ENCODE measurements at regions of chr3 and their contacts with region 1.

Region 1: GRCh38 chr3:186259612-186260383 is 102.2 kb downstream of the DGKG start:
- DNase-seq: peak; percentile 77 to 89
- H3K4me3 ChIP-seq: no peak overlapping the region
- H3K27ac ChIP-seq: no peak overlapping the region
- H3K4me1 ChIP-seq: peaks cover 0 to 8% (median 4%) of the 10 kb centered on the region in 4 experiments; a peak in 3 of 7 replicates
- H3K27me3 ChIP-seq: no peaks in the 10 kb centered on the region; a peak in 2 of 7 replicates
- CTCF ChIP-seq: peak; percentile 79 to 97 (median 94)
- EP300 ChIP-seq: peak in 1 of 2 experiments; percentile 41; a peak in 1 of 3 replicates
- POLR2A ChIP-seq: 0 out of 3 replicates have a peak, but pooled peaks of 1 of the 2 experiments have one; percentile 29
- RAD21 ChIP-seq: peak; percentile 87 to 93

Region 2: GRCh38 chr3:185976977-185977678 is 282.7 kb before region 1 on chr3:
- CTCF ChIA-PET with region 1: interaction called, 17 read pairs
- POLR2A ChIA-PET with region 1: no interaction called
- DNase-seq: peak; percentile 41 to 93
- H3K4me3 ChIP-seq: no peak overlapping the region
- H3K27ac ChIP-seq: no peak overlapping the region
- H3K4me1 ChIP-seq: no peaks in the 10 kb centered on the region
- H3K27me3 ChIP-seq: no peaks in the 10 kb centered on the region
- CTCF ChIP-seq: peak; percentile 90 to 99 (median 97)
- EP300 ChIP-seq: no peak
- POLR2A ChIP-seq: no peak
- RAD21 ChIP-seq: peak; percentile 79 to 82

Region 3: DNA sequence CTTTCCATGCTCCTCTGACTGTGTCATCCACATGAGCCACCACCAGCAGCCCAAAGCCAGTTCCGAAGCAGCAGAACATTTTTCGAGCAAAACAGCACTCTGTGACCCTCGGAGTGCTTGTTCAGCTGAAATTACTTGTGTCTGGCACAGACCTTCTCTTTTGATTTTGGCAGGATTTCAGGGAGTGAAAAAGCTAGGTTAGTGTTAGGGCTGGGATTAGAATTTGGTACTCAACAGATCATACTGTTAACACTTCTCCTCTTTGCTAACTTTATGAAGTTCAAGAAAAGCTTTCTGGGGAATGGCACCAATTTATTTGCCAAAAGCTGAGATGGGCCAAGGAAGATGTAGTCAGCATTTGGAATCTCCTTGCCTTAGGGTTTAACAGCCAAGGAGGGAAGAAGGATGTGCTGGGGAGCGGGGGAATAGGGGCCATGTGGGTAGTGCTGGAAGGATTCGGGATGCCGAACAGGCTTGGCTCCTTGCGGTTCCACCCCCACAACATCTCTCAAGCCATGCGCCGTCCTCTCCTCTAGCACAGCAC is 266.9 kb before region 1 on chr3:
- CTCF ChIA-PET with region 1: interaction called, 28 read pairs
- POLR2A ChIA-PET with region 1: no interaction called
- DNase-seq: no peak
- H3K4me3 ChIP-seq: no peak overlapping the region
- H3K27ac ChIP-seq: no peak overlapping the region
- H3K4me1 ChIP-seq: no peaks in the 10 kb centered on the region
- H3K27me3 ChIP-seq: no peaks in the 10 kb centered on the region
- CTCF ChIP-seq: no peak
- EP300 ChIP-seq: no peak
- POLR2A ChIP-seq: no peak
- RAD21 ChIP-seq: no peak

Region 4: GRCh38 chr3:186241910-186242821 is 17.6 kb before region 1 on chr3:
- CTCF ChIA-PET with region 1: interaction called, 156 read pairs
- POLR2A ChIA-PET with region 1: no interaction called
- DNase-seq: peak; percentile 64 to 80
- H3K4me3 ChIP-seq: peak overlapping the region in 3 of 4 experiments; percentile 7 to 13 (median 12); a peak in 3 of 8 replicates
- H3K27ac ChIP-seq: no peak overlapping the region
- H3K4me1 ChIP-seq: peaks cover 0 to 6% (median 2%) of the 10 kb centered on the region in 4 experiments; a peak in 3 of 7 replicates
- H3K27me3 ChIP-seq: no peaks in the 10 kb centered on the region
- CTCF ChIP-seq: peak; percentile 75 to 91 (median 87)
- EP300 ChIP-seq: no peak
- POLR2A ChIP-seq: no peak
- RAD21 ChIP-seq: peak; percentile 87 to 89

Region 5: GRCh38 chr3:186534113-186534669 is 274.4 kb after region 1 on chr3:
- CTCF ChIA-PET with region 1: interaction called, 146 read pairs
- POLR2A ChIA-PET with region 1: interaction called, 5 read pairs
- DNase-seq: no peak
- H3K4me3 ChIP-seq: no peak overlapping the region
- H3K27ac ChIP-seq: no peak overlapping the region
- H3K4me1 ChIP-seq: 0 out of 7 replicates have a peak, but pooled peaks cover 0 to 3% (median 0%) of the 10 kb centered on the region in 4 experiments
- H3K27me3 ChIP-seq: peaks cover 0 to 1% (median 0%) of the 10 kb centered on the region in 4 experiments; a peak in 1 of 7 replicates
- CTCF ChIP-seq: no peak
- EP300 ChIP-seq: no peak
- POLR2A ChIP-seq: no peak
- RAD21 ChIP-seq: no peak